Caco-2 (cell line): ENCODE measurements at regions of chr9 and their contacts with region 1.

Region 1: GRCh38 chr9:94014065-94014654 is 59.0 kb upstream of the BARX1 start:
- DNase-seq: peak in 1 of 2 experiments; percentile 7
- H3K4me3 ChIP-seq: no peak overlapping the region
- H3K4me3 Mint-ChIP-seq: no peak overlapping the region
- H3K27ac Mint-ChIP-seq: no peak overlapping the region
- H3K4me1 ChIP-seq: no peaks in the 10 kb centered on the region
- H3K4me1 Mint-ChIP-seq: no peaks in the 10 kb centered on the region
- H3K27me3 ChIP-seq: no peaks in the 10 kb centered on the region
- H3K27me3 Mint-ChIP-seq: no peaks in the 10 kb centered on the region
- CTCF ChIP-seq: peak; percentile 20 to 51

Region 2: DNA sequence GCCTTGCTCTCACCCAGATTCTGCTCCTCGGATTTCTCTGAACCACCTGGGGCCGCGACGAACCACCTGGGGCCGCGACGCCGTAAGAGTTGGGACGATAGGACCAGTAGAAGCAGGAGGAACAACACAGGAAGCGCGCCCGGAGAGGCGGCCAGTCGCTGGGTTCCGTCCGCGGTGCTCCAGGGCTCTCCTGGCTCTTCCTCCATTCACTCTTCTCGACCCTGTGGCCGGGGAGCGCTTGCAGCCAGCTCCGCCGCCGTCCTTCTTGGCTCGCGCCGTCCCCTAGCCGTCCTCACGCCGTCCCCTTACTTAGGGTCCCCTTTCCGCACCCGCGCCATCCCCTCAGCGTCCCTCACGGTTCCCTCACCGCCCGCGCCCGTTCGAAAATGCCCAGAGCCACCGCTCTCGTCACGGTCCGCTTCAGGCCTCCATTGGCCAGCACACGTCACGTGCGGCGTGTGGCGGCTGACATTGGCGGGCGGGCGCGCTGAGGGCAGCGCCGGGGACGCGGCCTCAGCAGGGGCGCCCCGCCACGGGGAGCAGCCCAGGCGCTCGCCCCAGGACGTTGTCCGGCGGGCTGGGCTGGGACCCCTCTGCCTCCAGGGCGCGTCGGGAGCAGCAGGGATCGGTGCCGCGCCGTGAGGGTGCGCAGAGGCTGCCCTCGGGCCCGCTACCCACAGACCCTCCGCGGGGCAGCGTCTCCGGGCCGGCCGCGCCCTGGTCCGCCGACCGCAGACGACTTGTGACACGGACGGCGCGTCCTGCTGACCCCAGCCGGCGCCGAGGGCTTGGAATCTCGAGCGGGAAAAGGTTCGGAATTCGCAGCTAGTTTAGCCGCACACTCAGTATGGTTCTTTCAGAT is 16.4 kb after region 1 on chr9:
- CTCF ChIA-PET with region 1: no interaction called
- POLR2A ChIA-PET with region 1: no interaction called
- intact Hi-C with region 1: no loop called
- DNase-seq: peak; percentile 77 to 78
- H3K4me3 ChIP-seq: peak overlapping the region; percentile 80
- H3K4me3 Mint-ChIP-seq: peak overlapping the region; percentile 98
- H3K27ac Mint-ChIP-seq: peak overlapping the region; percentile 95
- H3K4me1 ChIP-seq: no peaks in the 10 kb centered on the region
- H3K4me1 Mint-ChIP-seq: no peaks in the 10 kb centered on the region
- H3K27me3 ChIP-seq: no peaks in the 10 kb centered on the region
- H3K27me3 Mint-ChIP-seq: no peaks in the 10 kb centered on the region
- CTCF ChIP-seq: no peak

Region 3: GRCh38 chr9:94056442-94056974 is 42.3 kb after region 1 on chr9:
- CTCF ChIA-PET with region 1: no interaction called
- POLR2A ChIA-PET with region 1: no interaction called
- intact Hi-C with region 1: no loop called
- DNase-seq: no peak
- H3K4me3 ChIP-seq: no peak overlapping the region
- H3K4me3 Mint-ChIP-seq: no peak overlapping the region
- H3K27ac Mint-ChIP-seq: no peak overlapping the region
- H3K4me1 ChIP-seq: no peaks in the 10 kb centered on the region
- H3K4me1 Mint-ChIP-seq: no peaks in the 10 kb centered on the region
- H3K27me3 ChIP-seq: no peaks in the 10 kb centered on the region
- H3K27me3 Mint-ChIP-seq: no peaks in the 10 kb centered on the region
- CTCF ChIP-seq: no peak

Region 4: GRCh38 chr9:94213511-94214124 is 199.5 kb after region 1 on chr9:
- CTCF ChIA-PET with region 1: interaction called, 23 read pairs
- POLR2A ChIA-PET with region 1: no interaction called
- intact Hi-C with region 1: loop called (anchors 1 kb)
- DNase-seq: peak; percentile 64 to 69
- H3K4me3 ChIP-seq: no peak overlapping the region
- H3K4me3 Mint-ChIP-seq: no peak overlapping the region
- H3K27ac Mint-ChIP-seq: no peak overlapping the region
- H3K4me1 ChIP-seq: no peaks in the 10 kb centered on the region
- H3K4me1 Mint-ChIP-seq: no peaks in the 10 kb centered on the region
- H3K27me3 ChIP-seq: no peaks in the 10 kb centered on the region
- H3K27me3 Mint-ChIP-seq: peaks cover 3% of the 10 kb centered on the region
- CTCF ChIP-seq: peak; percentile 42 to 60

Region 5: GRCh38 chr9:94663140-94663539 is 649.0 kb after region 1 on chr9:
- CTCF ChIA-PET with region 1: no interaction called
- POLR2A ChIA-PET with region 1: no interaction called
- intact Hi-C with region 1: loop called (anchors 5 kb)
- DNase-seq: no peak
- H3K4me3 ChIP-seq: no peak overlapping the region
- H3K4me3 Mint-ChIP-seq: no peak overlapping the region
- H3K27ac Mint-ChIP-seq: no peak overlapping the region
- H3K4me1 ChIP-seq: peaks cover 10% of the 10 kb centered on the region
- H3K4me1 Mint-ChIP-seq: peaks cover 7% of the 10 kb centered on the region
- H3K27me3 ChIP-seq: no peaks in the 10 kb centered on the region
- H3K27me3 Mint-ChIP-seq: no peaks in the 10 kb centered on the region
- CTCF ChIP-seq: no peak